Spleen (tissue), 13 donors: ENCODE measurements at regions of chr7 and their contacts with region 1.

Region 1: DNA sequence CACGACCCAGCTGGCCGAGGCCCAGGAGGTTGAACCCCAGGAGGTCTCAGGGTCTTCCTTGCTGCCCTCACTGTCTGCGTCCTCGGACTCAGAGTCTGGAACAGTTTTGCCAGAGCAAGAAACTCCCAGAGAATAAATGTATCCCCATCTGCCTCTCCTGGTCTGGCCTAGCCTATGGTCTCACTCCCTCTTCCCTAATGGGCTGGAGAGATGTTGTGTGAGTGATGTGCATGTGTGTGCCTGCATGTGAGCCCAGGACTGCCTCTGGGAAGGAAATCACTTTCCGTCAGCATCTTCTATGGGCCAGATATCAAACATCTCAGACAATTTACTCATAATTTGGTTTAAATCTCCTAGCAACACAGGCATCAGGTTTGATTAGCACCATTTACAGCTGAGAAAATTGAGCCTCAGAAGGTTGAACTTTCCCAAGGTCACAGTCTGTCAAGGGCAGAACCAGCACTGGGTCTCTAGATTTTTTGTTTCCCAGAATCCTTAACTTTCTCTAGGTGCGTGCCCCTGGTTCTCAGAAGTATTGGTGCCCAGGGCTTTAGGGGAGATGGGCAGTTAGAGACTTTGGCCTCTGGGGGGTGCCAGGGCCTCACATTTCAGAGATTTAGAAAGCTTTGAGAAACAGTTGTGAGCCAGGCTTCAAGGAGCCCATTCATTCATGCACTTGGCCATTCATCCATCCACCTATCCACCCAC is 4.9 kb downstream of the TMEM270 start:
- DNase-seq: no peak
- H3K4me3 ChIP-seq: no peak overlapping the region
- H3K27ac ChIP-seq: no peak overlapping the region
- H3K4me1 ChIP-seq: peaks cover 0 to 15% (median 8%) of the 10 kb centered on the region in 6 donors
- H3K27me3 ChIP-seq: no peaks in the 10 kb centered on the region
- CTCF ChIP-seq: peak in 9 of 11 experiments; percentile 13 to 77 (median 62)
- POLR2A ChIP-seq: no peak

Region 2: GRCh38 chr7:73941836-73942551 is 76.1 kb after region 1 on chr7:
- intact Hi-C with region 1: no loop called
- DNase-seq: no peak
- H3K4me3 ChIP-seq: no peak overlapping the region
- H3K27ac ChIP-seq: no peak overlapping the region
- H3K4me1 ChIP-seq: no peaks in the 10 kb centered on the region
- H3K27me3 ChIP-seq: peaks cover 0 to 8% (median 0%) of the 10 kb centered on the region in 7 donors
- CTCF ChIP-seq: no peak
- POLR2A ChIP-seq: no peak

Region 3: GRCh38 chr7:74026903-74027551 is 161.1 kb after region 1 on chr7:
- intact Hi-C with region 1: loop called (anchors 5 kb)
- DNase-seq: peak; percentile 91
- H3K4me3 ChIP-seq: peak overlapping the region in 4 of 8 donors; percentile 47 to 64 (median 48)
- H3K27ac ChIP-seq: peak overlapping the region in 6 of 8 donors; percentile 21 to 78 (median 71)
- H3K4me1 ChIP-seq: peaks cover 11 to 83% (median 44%) of the 10 kb centered on the region in 6 donors
- H3K27me3 ChIP-seq: peaks cover 0 to 85% (median 25%) of the 10 kb centered on the region in 7 donors
- CTCF ChIP-seq: peak; percentile 77 to 99 (median 95)
- POLR2A ChIP-seq: no peak